GM10248 (cell line): ENCODE measurements at regions of chr19 and their contacts with region 1.

Region 1: GRCh38 chr19:11482384-11483050 is 1.7 kb upstream of the ELAVL3 start:
- DNase-seq: peak; percentile 93
- CTCF ChIP-seq: peak; percentile 96

Region 2: GRCh38 chr19:11293433-11294389 is 188.8 kb before region 1 on chr19:
- CTCF ChIA-PET with region 1: interaction called, 20 read pairs
- POLR2A ChIA-PET with region 1: no interaction called
- DNase-seq: peak; percentile 91
- CTCF ChIP-seq: peak; percentile 99

Region 3: DNA sequence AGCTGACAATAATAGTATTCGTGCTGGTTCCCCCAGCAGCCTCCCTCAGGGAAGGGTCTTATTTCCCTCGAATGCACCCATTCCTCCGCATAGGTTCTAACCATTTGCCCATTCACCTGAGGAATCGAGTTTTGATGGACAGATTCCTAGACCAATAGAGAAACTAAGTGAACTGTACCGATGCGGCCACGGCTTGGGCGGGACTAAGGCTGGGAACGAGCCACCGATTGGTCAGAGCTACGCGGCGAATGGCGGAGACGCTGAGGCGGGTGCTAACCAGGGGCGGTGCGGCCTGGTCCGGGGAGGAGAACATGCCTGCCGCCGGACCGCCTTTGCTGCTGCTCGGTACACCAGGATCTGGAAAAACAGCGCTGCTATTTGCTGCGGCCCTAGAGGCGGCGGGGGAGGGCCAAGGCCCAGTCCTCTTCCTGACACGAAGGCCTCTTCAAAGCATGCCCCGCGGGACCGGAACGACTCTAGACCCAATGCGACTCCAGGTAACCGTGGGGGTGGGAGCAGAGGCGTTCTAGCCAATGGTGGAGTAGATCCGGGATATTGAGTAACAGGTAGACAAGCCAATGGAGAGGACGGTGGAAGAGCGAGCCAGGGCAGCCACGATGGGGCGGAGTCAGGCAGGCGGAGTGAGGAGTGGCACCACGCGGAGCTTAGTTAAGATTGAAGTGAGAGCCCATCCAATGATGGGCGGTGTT is 107.9 kb before region 1 on chr19 and contains the start of gene SWSAP1:
- CTCF ChIA-PET with region 1: interaction called, 40 read pairs
- POLR2A ChIA-PET with region 1: no interaction called
- DNase-seq: peak; percentile 98
- CTCF ChIP-seq: no peak

Region 4: GRCh38 chr19:11435058-11435832 is 47.3 kb before region 1 on chr19 and contains the starts of genes ODAD3 and PRKCSH:
- CTCF ChIA-PET with region 1: interaction called, 18 read pairs
- POLR2A ChIA-PET with region 1: no interaction called
- DNase-seq: peak; percentile 99
- CTCF ChIP-seq: peak; percentile 78

Region 5: GRCh38 chr19:11463391-11463790 is 19.1 kb before region 1 on chr19:
- CTCF ChIA-PET with region 1: interaction called, 13 read pairs
- POLR2A ChIA-PET with region 1: interaction called, 4 read pairs
- DNase-seq: no peak
- CTCF ChIP-seq: no peak

Region 6: DNA sequence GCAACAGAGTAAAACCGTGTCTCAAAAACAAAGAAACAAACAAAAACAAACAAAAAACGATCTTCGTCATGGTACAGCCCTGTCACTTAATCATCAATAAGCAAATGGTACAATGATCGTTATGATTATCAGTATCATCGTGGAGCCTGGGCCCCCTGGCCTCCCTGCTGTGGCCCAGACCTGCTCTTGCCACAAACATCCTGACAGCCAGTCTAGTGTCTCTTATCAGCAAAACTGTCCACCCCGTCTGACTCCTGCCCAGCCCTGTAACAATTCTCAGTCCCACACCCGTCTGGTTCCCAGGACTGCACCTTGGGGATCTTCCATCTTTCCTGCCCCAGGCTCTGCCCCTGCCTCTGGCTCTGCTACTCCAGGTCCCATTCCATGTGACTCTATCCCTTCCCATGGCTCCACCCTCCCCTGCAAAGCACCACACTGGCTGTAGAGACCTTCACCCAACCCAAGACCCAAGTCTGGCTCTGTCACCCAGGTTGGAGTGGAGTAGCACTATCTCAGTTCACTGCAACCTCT is 17.4 kb after region 1 on chr19:
- CTCF ChIA-PET with region 1: interaction called, 16 read pairs
- POLR2A ChIA-PET with region 1: no interaction called
- DNase-seq: no peak
- CTCF ChIP-seq: no peak

Region 7: GRCh38 chr19:11528551-11529341 is 46.2 kb after region 1 on chr19 and contains the start of gene ECSIT:
- CTCF ChIA-PET with region 1: interaction called, 11 read pairs
- POLR2A ChIA-PET with region 1: no interaction called
- DNase-seq: peak; percentile 97
- CTCF ChIP-seq: no peak

Region 8: DNA sequence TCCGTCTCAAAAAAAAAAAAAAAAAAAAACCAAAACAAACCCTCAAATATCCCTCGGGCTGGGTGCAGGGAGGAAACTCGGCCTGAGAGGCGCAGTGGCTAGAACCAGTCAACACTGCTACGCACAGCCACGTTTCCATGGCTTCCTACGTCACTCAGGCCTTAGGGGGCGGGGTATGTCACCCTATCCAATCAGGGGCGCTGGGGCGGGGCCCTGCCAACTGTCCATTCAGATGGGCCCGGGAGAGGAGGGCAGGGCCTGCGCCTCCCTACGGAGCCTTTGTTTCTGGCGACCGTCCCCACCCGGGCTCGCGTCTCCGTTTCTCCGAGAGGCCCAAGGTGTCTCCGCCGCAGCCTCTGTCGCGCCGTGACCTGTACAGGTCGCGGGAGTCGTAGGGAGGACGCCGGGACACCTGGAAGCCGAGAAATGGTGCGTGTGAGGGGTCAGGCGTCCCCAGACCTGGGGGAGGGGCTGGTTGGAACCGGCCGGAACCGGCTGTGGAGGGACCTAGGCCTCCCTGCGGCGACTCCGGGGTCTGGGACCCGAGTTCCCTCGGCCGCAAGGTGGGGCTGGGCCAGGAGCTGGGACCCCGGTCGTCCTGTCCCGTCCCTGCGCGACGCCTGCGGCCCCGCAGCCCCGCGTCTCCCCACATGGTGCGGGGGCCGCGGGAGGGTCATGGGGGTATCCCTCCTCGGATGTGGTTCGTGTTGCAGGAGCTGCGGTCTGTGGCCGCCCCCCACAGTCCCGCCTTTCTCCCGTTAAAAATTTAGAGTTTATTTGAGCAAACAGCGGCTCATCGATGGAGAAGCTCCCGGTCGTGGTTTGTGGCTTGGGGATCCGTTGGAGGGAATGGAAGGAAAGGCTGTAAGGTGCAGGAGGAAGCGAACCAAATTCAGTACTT is 114.9 kb after region 1 on chr19 and contains the start of gene ZNF627:
- CTCF ChIA-PET with region 1: no interaction called
- POLR2A ChIA-PET with region 1: no interaction called
- DNase-seq: peak; percentile 98
- CTCF ChIP-seq: no peak